ENCODE measurements at regions of chr17 and their contacts with region 1.

Region 1: DNA sequence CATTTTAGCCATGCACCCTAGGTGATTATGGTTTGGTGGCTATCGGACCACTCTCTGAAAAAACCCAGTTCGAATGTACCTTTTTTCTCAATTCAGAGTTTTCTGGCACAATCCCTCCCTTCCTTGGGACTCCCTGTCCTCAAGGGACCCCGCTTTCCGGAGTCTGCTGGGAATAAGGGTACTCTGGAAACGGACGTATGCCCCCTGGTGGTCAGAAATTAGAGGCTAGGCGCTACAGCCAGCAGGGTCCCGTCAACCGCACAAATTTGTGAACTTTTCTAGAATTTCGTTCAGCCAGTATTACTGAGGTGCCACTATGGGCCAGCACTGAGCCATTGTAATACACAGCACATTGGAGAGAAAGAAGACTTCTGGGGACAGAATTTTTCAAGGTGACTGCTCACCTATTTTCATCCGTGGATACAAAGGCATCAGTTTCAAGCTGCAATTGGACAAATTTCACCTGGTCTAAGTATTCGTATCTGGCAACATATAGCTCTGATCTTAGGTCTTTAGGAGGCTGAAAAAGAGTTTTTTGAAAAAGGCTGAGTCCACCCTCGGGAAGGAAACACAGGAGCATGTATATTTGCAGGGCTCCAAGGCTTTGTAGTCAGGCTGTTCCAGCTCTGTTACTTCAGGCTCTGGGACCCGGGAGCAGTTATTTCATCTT is 27.1 kb upstream of the CRYBA1 start:
- DNase-seq: peak; percentile 45
- H3K4me3 ChIP-seq: no peak overlapping the region
- H3K27ac ChIP-seq: no peak overlapping the region
- H3K27me3 ChIP-seq: no peaks in the 10 kb centered on the region
- CTCF ChIP-seq: peak; percentile 94

Region 2: GRCh38 chr17:29124117-29124924 is 95.2 kb before region 1 on chr17:
- CTCF ChIA-PET with region 1: interaction called, 43 read pairs
- POLR2A ChIA-PET with region 1: no interaction called
- DNase-seq: no peak
- H3K4me3 ChIP-seq: no peak overlapping the region
- H3K27ac ChIP-seq: peak overlapping the region; percentile 31
- H3K27me3 ChIP-seq: no peaks in the 10 kb centered on the region
- CTCF ChIP-seq: peak; percentile 83

Region 3: DNA sequence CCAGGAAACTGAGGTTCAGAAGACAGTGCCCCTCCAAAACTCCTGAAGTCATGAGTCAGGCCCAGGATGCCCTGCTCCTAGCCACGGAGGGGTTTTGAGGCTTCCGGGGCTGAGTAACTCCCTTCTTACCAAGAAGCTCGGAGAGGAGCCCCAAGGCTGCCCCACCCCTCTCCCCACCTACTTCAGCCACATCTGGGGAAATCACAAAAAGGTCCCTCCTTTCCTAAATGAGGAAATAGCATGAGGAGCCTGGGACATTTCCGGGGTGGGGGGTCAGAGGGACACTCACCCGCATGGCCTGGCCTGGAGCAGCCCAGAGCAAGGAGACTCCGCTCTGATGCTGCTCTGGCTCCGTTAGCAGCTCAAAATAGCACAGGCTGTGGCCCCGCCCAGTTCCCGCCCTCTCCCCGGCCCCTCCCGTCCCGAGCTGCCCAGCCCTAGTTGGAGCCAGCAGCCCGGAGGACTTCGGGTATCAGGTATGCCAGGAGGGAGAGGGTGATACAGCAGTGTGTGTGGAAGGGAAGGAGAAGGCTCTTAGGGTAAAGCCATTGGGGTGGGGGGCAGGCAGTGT is 79.4 kb before region 1 on chr17:
- CTCF ChIA-PET with region 1: interaction called, 158 read pairs
- POLR2A ChIA-PET with region 1: no interaction called
- DNase-seq: no peak
- H3K4me3 ChIP-seq: peak overlapping the region; percentile 53
- H3K27ac ChIP-seq: peak overlapping the region; percentile 70
- H3K27me3 ChIP-seq: no peaks in the 10 kb centered on the region
- CTCF ChIP-seq: no peak

Region 4: GRCh38 chr17:29180034-29180787 is 39.3 kb before region 1 on chr17 and contains the start of gene MYO18A:
- CTCF ChIA-PET with region 1: interaction called, 26 read pairs
- POLR2A ChIA-PET with region 1: no interaction called
- DNase-seq: peak; percentile 32
- H3K4me3 ChIP-seq: peak within 1 kb of the TSS; percentile 67
- H3K27ac ChIP-seq: no peak within 1 kb of the TSS
- H3K27me3 ChIP-seq: no peaks in the 10 kb centered on the region
- CTCF ChIP-seq: peak; percentile 77
- polyA plus RNA-seq, gene MYO18A: 9.8 and 16.7 TPM in 2 replicates

Region 5: DNA sequence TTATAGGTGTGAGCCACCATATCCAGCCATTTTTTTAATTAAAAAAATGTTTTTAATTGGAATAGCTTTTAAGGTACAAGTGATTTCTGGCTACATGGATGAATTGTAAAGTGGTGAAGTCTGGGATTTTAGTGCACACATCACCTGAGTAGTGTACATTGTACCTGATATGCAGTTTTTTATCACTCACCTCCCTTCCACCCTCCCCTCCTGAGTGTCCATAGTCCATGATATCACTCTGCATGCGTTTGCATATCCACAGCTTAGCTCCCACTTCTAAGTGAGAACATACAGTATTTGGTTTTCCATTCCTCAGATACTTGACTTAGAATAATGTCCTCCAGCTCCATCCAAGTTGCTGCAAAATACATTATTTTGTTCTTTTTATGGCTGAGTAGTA is 13.8 kb after region 1 on chr17:
- CTCF ChIA-PET with region 1: interaction called, 33 read pairs
- POLR2A ChIA-PET with region 1: no interaction called
- DNase-seq: no peak
- H3K4me3 ChIP-seq: no peak overlapping the region
- H3K27ac ChIP-seq: no peak overlapping the region
- H3K27me3 ChIP-seq: no peaks in the 10 kb centered on the region
- CTCF ChIP-seq: no peak

Region 6: DNA sequence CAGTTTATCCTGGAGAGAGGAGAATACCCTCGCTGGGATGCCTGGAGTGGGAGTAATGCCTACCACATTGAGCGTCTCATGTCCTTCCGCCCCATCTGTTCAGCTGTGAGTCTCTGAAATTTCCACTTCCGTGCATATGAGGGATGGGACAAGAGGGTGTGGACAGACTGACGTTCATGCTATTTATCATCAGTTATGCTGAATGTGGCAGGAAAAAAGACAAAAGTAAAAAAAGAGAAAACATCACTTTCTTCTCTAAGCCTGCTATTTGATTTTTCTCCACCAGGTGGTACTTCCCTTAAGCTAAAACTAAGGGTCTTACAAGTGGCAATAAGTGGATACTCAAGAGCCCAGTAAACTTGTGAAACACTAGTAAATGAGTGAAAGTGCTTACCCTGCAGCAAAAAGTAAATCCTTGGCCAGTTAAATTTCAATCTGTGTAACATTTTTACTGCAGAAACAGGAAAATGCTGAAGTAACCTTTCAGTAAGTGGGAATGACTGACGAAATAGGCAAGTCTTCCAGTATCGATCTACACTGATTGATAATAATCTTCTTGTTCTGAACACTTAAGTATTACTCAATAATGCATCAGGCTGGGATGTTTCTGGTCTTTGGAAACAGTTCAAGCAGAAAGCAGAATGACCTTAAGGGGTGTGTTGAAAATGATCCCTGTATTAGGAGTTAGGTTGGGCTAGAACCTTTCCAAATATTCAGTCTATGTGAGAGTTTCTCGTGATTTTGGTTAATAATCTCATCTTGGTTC is 32.8 kb after region 1 on chr17:
- CTCF ChIA-PET with region 1: interaction called, 48 read pairs
- POLR2A ChIA-PET with region 1: no interaction called
- DNase-seq: no peak
- H3K4me3 ChIP-seq: no peak overlapping the region
- H3K27ac ChIP-seq: peak overlapping the region; percentile 22
- H3K27me3 ChIP-seq: no peaks in the 10 kb centered on the region
- CTCF ChIP-seq: peak; percentile 56

Region 7: DNA sequence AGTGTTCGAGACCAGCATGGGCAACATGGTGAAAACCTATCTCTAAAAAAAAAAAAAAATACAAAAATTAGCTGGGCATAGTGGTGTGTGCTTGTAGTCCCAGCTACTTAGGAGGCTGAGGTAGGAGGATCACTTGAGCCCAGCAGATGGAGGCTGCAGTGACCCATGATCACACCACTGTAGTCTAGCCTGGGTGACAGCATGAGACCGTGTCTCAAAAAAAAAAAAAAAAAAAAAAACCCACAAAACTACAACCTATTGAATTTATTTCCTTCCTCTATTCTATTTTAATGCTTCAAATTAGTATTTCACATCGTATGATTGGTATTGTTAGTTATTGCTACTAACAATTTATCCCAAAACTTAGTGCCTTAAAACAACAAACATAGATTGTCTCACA is 83.9 kb after region 1 on chr17:
- CTCF ChIA-PET with region 1: no interaction called
- POLR2A ChIA-PET with region 1: no interaction called
- DNase-seq: no peak
- H3K4me3 ChIP-seq: no peak overlapping the region
- H3K27ac ChIP-seq: no peak overlapping the region
- H3K27me3 ChIP-seq: peaks cover 2% of the 10 kb centered on the region
- CTCF ChIP-seq: no peak

Region 8: GRCh38 chr17:29591737-29592624 is 372.5 kb after region 1 on chr17:
- CTCF ChIA-PET with region 1: interaction called, 21 read pairs
- POLR2A ChIA-PET with region 1: no interaction called
- DNase-seq: no peak
- H3K4me3 ChIP-seq: peak overlapping the region; percentile 44
- H3K27ac ChIP-seq: peak overlapping the region; percentile 65
- H3K27me3 ChIP-seq: no peaks in the 10 kb centered on the region
- CTCF ChIP-seq: peak; percentile 98

Region 9: DNA sequence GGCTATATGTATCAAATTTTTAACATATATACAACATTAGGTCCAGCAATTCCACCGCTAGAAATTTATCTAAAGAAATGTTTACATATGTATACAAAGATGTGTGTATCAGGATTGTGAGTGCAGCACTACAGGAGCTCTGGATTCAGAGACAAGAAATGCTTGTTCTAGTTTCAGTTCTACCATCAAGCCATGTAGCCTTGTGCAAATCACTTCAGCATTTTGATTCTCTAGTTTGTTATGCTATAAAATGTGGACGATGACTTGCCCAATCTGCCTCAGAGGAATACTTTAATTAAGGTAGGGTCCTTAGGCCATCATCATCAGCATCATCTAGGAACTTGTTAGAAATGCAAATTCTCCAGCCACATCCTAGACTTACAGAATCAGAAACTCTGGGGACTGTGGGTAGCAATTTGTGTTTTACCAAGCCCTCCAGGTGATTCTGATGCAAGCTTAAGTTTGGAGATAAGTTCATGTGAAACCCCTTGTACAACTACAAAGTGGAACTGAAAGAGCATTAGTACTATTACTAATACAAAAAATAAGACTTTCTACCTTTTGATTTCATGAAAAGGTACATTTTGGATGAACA is 534.4 kb after region 1 on chr17:
- CTCF ChIA-PET with region 1: no interaction called
- POLR2A ChIA-PET with region 1: no interaction called
- DNase-seq: no peak
- H3K4me3 ChIP-seq: no peak overlapping the region
- H3K27ac ChIP-seq: no peak overlapping the region
- H3K27me3 ChIP-seq: no peaks in the 10 kb centered on the region
- CTCF ChIP-seq: no peak

Measured in AG04450 (cell line).